Caco-2 (cell line): ENCODE measurements at regions of chr10 and their contacts with region 1.

Region 1: GRCh38 chr10:60778214-60779029 is at the start of gene CDK1:
- DNase-seq: peak; percentile 100
- H3K4me3 ChIP-seq: peak within 1 kb of the TSS; percentile 92
- H3K4me3 Mint-ChIP-seq: peak within 1 kb of the TSS; percentile 92
- H3K27ac Mint-ChIP-seq: peak within 1 kb of the TSS; percentile 96
- H3K4me1 ChIP-seq: peaks cover 22% of the 10 kb centered on the region
- H3K4me1 Mint-ChIP-seq: peaks cover 24% of the 10 kb centered on the region
- H3K27me3 ChIP-seq: no peaks in the 10 kb centered on the region
- H3K27me3 Mint-ChIP-seq: no peaks in the 10 kb centered on the region
- CTCF ChIP-seq: no peak
- total RNA-seq, gene CDK1: 193 and 199 TPM in 2 replicates

Region 2: GRCh38 chr10:60757420-60757895 is 21.0 kb before region 1 on chr10:
- CTCF ChIA-PET with region 1: no interaction called
- POLR2A ChIA-PET with region 1: interaction called, 9 read pairs
- intact Hi-C with region 1: loop called (anchors 1 kb)
- DNase-seq: peak; percentile 58 to 80
- H3K4me3 ChIP-seq: no peak overlapping the region
- H3K4me3 Mint-ChIP-seq: peak overlapping the region; percentile 14
- H3K27ac Mint-ChIP-seq: no peak overlapping the region
- H3K4me1 ChIP-seq: peaks cover 13% of the 10 kb centered on the region
- H3K4me1 Mint-ChIP-seq: peaks cover 14% of the 10 kb centered on the region
- H3K27me3 ChIP-seq: no peaks in the 10 kb centered on the region
- H3K27me3 Mint-ChIP-seq: no peaks in the 10 kb centered on the region
- CTCF ChIP-seq: no peak

Region 3: GRCh38 chr10:60816628-60817397 is 38.4 kb after region 1 on chr10:
- CTCF ChIA-PET with region 1: no interaction called
- POLR2A ChIA-PET with region 1: no interaction called
- intact Hi-C with region 1: no loop called
- DNase-seq: peak; percentile 63 to 79
- H3K4me3 ChIP-seq: no peak overlapping the region
- H3K4me3 Mint-ChIP-seq: no peak overlapping the region
- H3K27ac Mint-ChIP-seq: no peak overlapping the region
- H3K4me1 ChIP-seq: no peaks in the 10 kb centered on the region
- H3K4me1 Mint-ChIP-seq: no peaks in the 10 kb centered on the region
- H3K27me3 ChIP-seq: no peaks in the 10 kb centered on the region
- H3K27me3 Mint-ChIP-seq: peaks cover 13% of the 10 kb centered on the region
- CTCF ChIP-seq: peak; percentile 93 to 98

Region 4: DNA sequence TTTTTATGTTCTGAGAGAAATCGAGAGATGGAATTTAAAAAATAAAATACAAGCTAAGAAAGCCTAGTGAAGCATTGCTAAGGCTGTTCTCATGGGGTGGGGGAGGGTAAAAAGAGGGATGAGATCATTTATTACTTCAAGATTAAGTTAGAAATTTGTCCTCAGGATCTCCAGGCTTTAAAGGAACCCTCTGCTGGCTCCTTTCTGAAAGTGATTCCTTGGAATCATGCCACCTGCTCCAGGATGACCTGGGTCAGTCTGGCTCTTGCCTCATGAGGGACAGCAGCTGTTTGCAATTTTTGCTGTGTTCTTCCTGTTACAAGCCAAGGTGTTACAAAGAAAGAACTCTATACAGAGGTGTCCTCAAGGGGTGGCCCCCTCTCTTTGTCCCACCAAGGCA is 69.7 kb after region 1 on chr10:
- CTCF ChIA-PET with region 1: no interaction called
- POLR2A ChIA-PET with region 1: no interaction called
- intact Hi-C with region 1: no loop called
- DNase-seq: no peak
- H3K4me3 ChIP-seq: no peak overlapping the region
- H3K4me3 Mint-ChIP-seq: no peak overlapping the region
- H3K27ac Mint-ChIP-seq: no peak overlapping the region
- H3K4me1 ChIP-seq: no peaks in the 10 kb centered on the region
- H3K4me1 Mint-ChIP-seq: no peaks in the 10 kb centered on the region
- H3K27me3 ChIP-seq: no peaks in the 10 kb centered on the region; the same call in 1 of the 2 replicates
- H3K27me3 Mint-ChIP-seq: no peaks in the 10 kb centered on the region
- CTCF ChIP-seq: no peak

Region 5: GRCh38 chr10:61000769-61001730 is 222.6 kb after region 1 on chr10:
- CTCF ChIA-PET with region 1: no interaction called
- POLR2A ChIA-PET with region 1: no interaction called
- intact Hi-C with region 1: no loop called
- DNase-seq: peak; percentile 77 to 81
- H3K4me3 ChIP-seq: peak overlapping the region; percentile 42
- H3K4me3 Mint-ChIP-seq: peak overlapping the region; percentile 83
- H3K27ac Mint-ChIP-seq: no peak overlapping the region
- H3K4me1 ChIP-seq: peaks cover 13% of the 10 kb centered on the region
- H3K4me1 Mint-ChIP-seq: peaks cover 5% of the 10 kb centered on the region
- H3K27me3 ChIP-seq: no peaks in the 10 kb centered on the region
- H3K27me3 Mint-ChIP-seq: peaks cover 4% of the 10 kb centered on the region
- CTCF ChIP-seq: no peak